ENCODE measurements at regions of chr17 and their contacts with region 1.

Region 1: GRCh38 chr17:79042421-79043190 is 18.6 kb downstream of the C1QTNF1 start:
- DNase-seq: peak in 1 of 2 donors; percentile 93
- H3K4me3 ChIP-seq: no peak overlapping the region
- CTCF ChIP-seq: peak in 1 of 3 donors; percentile 63
- POLR2A ChIP-seq: no peak

Region 2: DNA sequence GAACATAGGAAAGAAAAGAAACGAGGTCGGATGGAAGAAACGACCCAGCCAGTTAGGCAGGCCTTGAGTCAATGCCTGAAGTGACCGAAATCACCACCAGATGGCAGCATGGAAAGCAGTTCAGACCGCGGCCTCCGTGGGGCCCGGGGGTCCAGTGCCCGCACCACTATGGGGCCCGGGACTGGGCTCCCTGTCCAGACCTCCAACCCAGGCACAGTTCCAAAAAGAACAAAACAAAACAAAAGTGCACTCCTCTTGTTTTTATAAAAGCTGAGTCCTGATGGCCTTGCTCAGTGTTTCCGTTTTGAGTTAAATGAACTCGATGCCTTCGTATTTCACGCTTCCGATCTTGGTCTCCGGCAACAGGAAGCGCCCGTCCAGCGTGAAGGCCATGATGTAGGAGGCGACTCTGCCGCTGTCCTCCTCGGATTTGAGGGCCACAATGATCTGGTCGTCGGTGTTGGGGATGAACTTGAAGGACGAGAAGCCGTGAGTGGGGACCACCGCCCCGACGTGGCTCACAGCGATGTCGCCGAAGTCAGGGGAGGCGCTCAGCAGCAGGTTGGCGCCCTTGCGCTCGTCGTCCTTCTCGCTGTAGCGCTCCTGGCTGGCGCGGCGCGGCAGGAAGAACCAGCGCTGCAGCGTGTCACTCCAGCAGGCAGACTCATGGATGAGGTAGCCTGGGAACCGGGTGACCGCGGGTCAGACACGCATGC is 49.2 kb before region 1 on chr17:
- intact Hi-C with region 1: loop called (anchors 5 kb)
- DNase-seq: peak in 1 of 2 donors; percentile 87
- H3K4me3 ChIP-seq: no peak overlapping the region
- CTCF ChIP-seq: peak in 1 of 3 donors; percentile 50
- POLR2A ChIP-seq: no peak